WTC11 (cell line): ENCODE measurements at regions of chr14 and their contacts with region 1.

Region 1: GRCh38 chr14:75811872-75812499 is 150.9 kb downstream of the TTLL5 start:
- DNase-seq: no peak
- ATAC-seq: peak; percentile 53
- H3K4me3 Mint-ChIP-seq: no peak overlapping the region
- H3K27ac Mint-ChIP-seq: peak overlapping the region; percentile 97
- H3K4me1 Mint-ChIP-seq: peaks cover 27% of the 10 kb centered on the region
- H3K27me3 Mint-ChIP-seq: no peaks in the 10 kb centered on the region
- CTCF ChIP-seq: no peak

Region 2: GRCh38 chr14:75800792-75801191 is 11.2 kb before region 1 on chr14:
- CTCF ChIA-PET with region 1: interaction called, 17 read pairs
- POLR2A ChIA-PET with region 1: no interaction called
- DNase-seq: peak; percentile 64
- ATAC-seq: peak; percentile 95
- H3K4me3 Mint-ChIP-seq: no peak overlapping the region
- H3K27ac Mint-ChIP-seq: no peak overlapping the region
- H3K4me1 Mint-ChIP-seq: peaks cover 12% of the 10 kb centered on the region
- H3K27me3 Mint-ChIP-seq: no peaks in the 10 kb centered on the region
- CTCF ChIP-seq: 0 out of 2 replicates have a peak, but pooled peaks have one; percentile 21